ENCODE measurements at regions of chr1 and their contacts with region 1.

Region 1: DNA sequence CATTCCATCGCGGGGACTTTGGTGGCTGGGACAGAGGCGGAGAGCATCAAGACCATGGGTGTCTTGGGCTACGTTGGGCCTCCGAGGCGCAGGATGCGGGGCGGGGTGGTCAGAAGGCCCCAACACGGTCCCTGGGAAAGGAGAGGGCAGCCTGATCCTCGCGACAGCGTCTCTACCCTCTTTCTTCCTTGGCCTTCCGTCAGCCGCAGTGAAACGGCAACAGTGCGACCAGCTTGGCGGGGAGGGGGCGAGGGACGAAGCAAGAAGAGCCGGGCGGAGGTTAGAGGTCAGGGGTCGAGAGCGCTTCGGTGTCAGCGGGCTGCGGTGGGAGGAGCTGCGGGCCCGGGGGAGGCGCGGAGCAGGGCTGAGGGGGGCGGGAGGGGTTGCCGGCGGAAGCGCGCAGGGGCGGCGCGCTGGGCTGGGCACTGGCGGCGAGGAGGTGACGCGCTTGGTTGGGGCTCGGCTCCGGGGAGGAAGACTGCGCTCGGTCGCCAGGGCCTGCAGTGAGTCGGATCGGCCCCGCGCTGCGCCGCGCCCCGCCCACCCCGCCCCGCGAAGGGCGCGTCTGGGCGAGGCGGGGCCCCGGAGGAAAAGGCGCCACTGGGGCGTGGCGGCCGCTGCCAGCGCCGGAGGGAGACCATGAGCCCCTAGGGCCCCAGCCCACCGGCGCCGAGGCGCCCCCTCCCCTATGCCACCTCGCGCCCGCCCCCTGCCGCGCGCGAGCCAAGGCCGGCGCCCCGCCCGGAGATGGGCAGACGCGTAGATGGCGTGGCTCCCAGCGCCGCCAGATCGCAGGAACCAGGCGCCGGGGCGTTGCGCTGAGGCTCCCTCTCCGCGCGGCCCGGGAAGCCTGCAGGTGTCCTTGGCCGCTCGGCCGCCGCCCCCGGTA is at the start of gene KCNC4:
- DNase-seq: peak; percentile 89 to 95
- H3K4me3 ChIP-seq: peak within 1 kb of the TSS; percentile 72 to 87
- H3K27ac ChIP-seq: peak within 1 kb of the TSS; percentile 90 to 91
- H3K4me1 ChIP-seq: peaks cover 0 to 53% (median 41%) of the 10 kb centered on the region in 4 donors
- H3K27me3 ChIP-seq: no peaks in the 10 kb centered on the region
- CTCF ChIP-seq: no peak

Region 2: DNA sequence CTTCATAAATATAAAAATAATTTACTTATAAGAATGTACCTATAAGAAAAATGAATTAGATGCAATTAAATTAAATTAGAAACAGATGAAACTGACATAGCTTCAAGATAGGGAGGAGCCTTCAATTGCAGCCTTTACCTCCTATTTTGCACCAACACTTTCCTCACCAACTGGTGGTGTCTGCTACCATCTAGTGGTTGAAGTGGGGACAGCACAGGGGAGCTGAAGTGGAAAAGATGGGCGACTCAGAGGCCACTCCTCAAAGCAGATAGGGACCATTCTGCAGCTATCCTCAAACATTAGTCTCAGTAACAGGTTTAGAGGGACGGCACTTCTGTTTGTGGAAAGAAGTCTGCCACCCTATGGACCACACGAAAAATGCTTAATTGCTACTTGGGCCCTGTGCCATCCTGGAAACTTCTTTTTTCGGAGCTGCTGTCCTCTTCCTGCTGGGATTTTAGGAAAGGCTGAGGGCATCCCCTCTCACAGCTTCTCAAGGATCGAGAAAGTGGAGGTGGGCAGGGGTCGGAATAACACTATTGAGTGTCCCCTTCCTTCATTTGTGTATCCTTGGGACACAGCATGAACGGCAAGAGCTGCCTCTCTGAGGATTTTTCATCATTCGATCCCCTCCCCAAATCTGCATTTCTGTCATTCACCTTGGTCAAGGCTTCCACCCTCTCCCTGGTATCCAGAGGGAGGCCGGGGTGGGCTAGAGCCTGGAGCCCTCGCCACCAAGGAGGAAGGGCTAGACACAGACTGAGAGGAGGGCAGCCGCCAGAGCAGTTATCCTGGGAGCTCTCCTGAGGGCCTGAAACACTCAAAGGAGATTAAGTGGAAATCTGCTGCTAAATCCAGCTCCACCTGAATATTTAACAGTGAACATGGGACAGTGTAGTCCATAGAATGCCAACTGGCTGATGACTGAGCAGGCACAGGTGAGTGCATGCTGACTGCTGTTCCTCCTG is 250.6 kb after region 1 on chr1:
- intact Hi-C with region 1: loop called (anchors 5 kb)
- DNase-seq: peak; percentile 85 to 86
- H3K4me3 ChIP-seq: no peak overlapping the region
- H3K27ac ChIP-seq: no peak overlapping the region
- H3K4me1 ChIP-seq: no peaks in the 10 kb centered on the region
- H3K27me3 ChIP-seq: peaks cover 0 to 8% of the 10 kb centered on the region in 2 donors
- CTCF ChIP-seq: peak; percentile 96 to 98

Measured in tibial artery (tissue), 4 donors.